GM13976 (cell line): ENCODE measurements at regions of chr3 and their contacts with region 1.

Region 1: GRCh38 chr3:50611464-50612233 is at the start of gene CISH:
- DNase-seq: peak; percentile 94
- CTCF ChIP-seq: no peak

Region 2: GRCh38 chr3:50572158-50572557 is 39.5 kb before region 1 on chr3:
- in situ Hi-C with region 1: loop called (anchors 5 kb)
- DNase-seq: peak; percentile 80
- CTCF ChIP-seq: peak; percentile 83

Region 3: GRCh38 chr3:52136513-52136912 is 1524.9 kb after region 1 on chr3:
- in situ Hi-C with region 1: no loop called
- DNase-seq: no peak
- CTCF ChIP-seq: no peak